Mammary epithelial cell (primary cell): ENCODE measurements at regions of chr13 and their contacts with region 1.

Region 1: GRCh38 chr13:27826379-27827353 is 34.4 kb downstream of the GSX1 start:
- DNase-seq: peak; percentile 75
- H3K4me3 ChIP-seq: peak overlapping the region in 2 of 3 experiments; percentile 32 to 42
- H3K27ac ChIP-seq: no peak overlapping the region
- H3K4me1 ChIP-seq: peaks cover 11% of the 10 kb centered on the region
- H3K27me3 ChIP-seq: peaks cover 10% of the 10 kb centered on the region
- CTCF ChIP-seq: peak; percentile 72 to 91

Region 2: DNA sequence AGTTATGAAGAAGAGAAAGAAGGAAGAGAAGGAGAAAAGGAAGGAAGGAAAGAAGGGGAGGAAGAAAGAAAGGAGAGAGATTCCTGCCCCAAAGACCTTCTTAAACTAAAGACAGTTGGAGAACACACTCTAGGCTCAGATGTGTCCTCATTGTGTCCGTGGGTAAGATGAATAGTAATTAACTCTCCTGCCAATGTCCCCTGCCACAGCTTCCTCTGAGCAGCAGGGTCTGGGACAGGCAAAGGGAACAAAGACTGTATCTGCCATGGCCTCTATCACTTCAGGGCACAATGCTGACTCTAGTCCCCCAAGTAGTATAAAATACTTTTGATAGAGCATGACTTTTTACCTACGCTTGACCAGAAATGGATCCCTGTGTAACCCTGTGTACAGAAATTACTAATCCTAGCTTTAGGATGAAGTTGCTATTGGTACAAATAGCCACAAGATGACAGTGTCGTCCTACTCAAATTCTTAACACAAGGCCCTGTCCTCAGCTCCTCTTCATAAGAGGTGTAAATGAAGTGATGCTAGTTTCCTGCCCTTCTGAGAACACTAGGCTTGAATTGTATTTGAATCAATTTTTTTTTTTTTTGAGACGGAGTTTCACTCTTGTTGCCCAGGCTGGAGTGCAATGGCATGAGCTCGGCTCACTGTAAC is 879.9 kb before region 1 on chr13:
- CTCF ChIA-PET with region 1: interaction called, 14 read pairs
- dilution Hi-C with region 1: no loop called
- in situ Hi-C with region 1: no loop called
- intact Hi-C with region 1: no loop called
- DNase-seq: peak; percentile 29
- H3K4me3 ChIP-seq: no peak overlapping the region
- H3K27ac ChIP-seq: no peak overlapping the region
- H3K4me1 ChIP-seq: no peaks in the 10 kb centered on the region
- H3K27me3 ChIP-seq: no peaks in the 10 kb centered on the region
- CTCF ChIP-seq: peak; percentile 78 to 86

Region 3: GRCh38 chr13:27379694-27380641 is 446.7 kb before region 1 on chr13:
- CTCF ChIA-PET with region 1: interaction called, 4 read pairs
- dilution Hi-C with region 1: no loop called
- in situ Hi-C with region 1: loop called (anchors 10 kb)
- intact Hi-C with region 1: loop called (anchors 1 kb)
- DNase-seq: peak; percentile 49
- H3K4me3 ChIP-seq: no peak overlapping the region
- H3K27ac ChIP-seq: no peak overlapping the region
- H3K4me1 ChIP-seq: no peaks in the 10 kb centered on the region
- H3K27me3 ChIP-seq: no peaks in the 10 kb centered on the region
- CTCF ChIP-seq: peak; percentile 70 to 76

Region 4: GRCh38 chr13:27533155-27533643 is 293.5 kb before region 1 on chr13:
- CTCF ChIA-PET with region 1: interaction called, 9 read pairs
- dilution Hi-C with region 1: no loop called
- in situ Hi-C with region 1: loop called (anchors 5 to 10 kb)
- intact Hi-C with region 1: loop called (anchors 1 kb)
- DNase-seq: peak; percentile 62
- H3K4me3 ChIP-seq: no peak overlapping the region
- H3K27ac ChIP-seq: no peak overlapping the region
- H3K4me1 ChIP-seq: peaks cover 4% of the 10 kb centered on the region
- H3K27me3 ChIP-seq: no peaks in the 10 kb centered on the region
- CTCF ChIP-seq: peak; percentile 78 to 97

Region 5: DNA sequence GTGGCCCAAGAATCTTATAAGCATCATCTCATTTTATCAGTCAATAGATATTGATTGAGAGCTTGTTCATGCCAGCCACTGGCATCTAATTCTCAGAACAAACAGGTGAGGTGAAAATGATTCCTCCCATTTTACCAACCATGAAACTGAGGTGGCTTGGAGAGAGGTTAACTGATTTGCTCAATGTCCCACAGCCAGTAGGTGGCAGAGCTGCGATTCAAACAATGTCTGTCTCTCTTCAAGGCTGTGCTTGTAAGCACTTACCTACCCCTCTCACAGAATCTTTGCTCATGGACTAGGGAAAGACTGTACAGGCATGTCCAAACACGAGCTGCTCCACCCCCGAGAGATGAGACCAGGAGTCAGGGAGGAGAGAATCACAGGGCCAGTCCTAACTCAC is 55.9 kb before region 1 on chr13:
- CTCF ChIA-PET with region 1: interaction called, 11 read pairs
- dilution Hi-C with region 1: no loop called
- in situ Hi-C with region 1: loop called in 1 of 2 experiments (anchors 10 kb)
- intact Hi-C with region 1: loop called (anchors 1 kb)
- DNase-seq: peak; percentile 86
- H3K4me3 ChIP-seq: no peak overlapping the region
- H3K27ac ChIP-seq: no peak overlapping the region
- H3K4me1 ChIP-seq: no peaks in the 10 kb centered on the region
- H3K27me3 ChIP-seq: no peaks in the 10 kb centered on the region
- CTCF ChIP-seq: peak; percentile 70 to 78

Region 6: DNA sequence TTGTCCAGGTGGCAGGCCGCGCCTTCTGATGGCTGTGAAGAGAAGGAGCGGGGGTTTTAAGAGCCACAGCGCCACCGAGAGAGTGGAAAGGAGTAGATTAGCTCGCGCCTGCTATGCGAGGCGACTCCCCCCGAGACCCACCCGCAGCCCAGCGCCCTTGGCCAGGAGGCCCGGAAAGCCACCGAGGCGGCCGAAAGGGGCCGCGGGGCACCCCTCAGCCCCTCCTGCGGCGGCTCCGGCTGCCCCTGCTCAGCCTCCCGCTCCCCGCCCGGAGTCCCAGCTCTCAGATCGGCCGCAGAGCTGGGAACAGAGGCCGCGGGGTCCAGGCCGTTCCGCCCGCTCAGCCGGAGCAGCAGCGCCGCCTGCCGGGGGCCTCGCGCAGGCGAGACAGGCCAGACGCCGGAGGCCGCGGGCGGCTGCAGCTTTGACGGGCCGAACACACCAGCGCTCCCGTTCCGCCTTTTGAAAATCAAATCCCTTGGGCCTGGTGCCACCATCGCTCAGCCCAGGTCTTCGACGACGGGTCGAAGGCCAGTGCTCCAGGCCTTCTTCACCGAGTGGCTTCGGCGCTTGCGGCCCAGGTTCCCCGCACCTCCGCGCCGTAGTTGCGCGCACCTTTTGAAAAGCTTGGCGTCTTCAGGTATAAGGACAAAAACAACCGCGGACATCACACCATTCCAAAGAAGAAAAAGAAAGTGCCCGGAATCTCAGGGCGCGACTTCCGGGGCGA is 127.2 kb after region 1 on chr13:
- CTCF ChIA-PET with region 1: interaction called, 9 read pairs
- dilution Hi-C with region 1: loop called (anchors 25 kb)
- in situ Hi-C with region 1: no loop called
- intact Hi-C with region 1: loop called (anchors 1 kb)
- DNase-seq: peak; percentile 69
- H3K4me3 ChIP-seq: peak overlapping the region; percentile 51 to 61 (median 56)
- H3K27ac ChIP-seq: no peak overlapping the region
- H3K4me1 ChIP-seq: peaks cover 12% of the 10 kb centered on the region
- H3K27me3 ChIP-seq: peaks cover 7% of the 10 kb centered on the region
- CTCF ChIP-seq: peak; percentile 64 to 82

Region 7: GRCh38 chr13:27997904-27998522 is 171.3 kb after region 1 on chr13:
- CTCF ChIA-PET with region 1: no interaction called
- dilution Hi-C with region 1: no loop called
- in situ Hi-C with region 1: loop called in 1 of 2 experiments (anchors 25 kb)
- intact Hi-C with region 1: loop called (anchors 5 kb)
- DNase-seq: peak; percentile 36
- H3K4me3 ChIP-seq: no peak overlapping the region
- H3K27ac ChIP-seq: no peak overlapping the region
- H3K4me1 ChIP-seq: no peaks in the 10 kb centered on the region
- H3K27me3 ChIP-seq: no peaks in the 10 kb centered on the region
- CTCF ChIP-seq: peak; percentile 43 to 59